Right ventricle myocardium inferior (tissue), 1 donor: ENCODE measurements at regions of chr10 and their contacts with region 1.

Region 1: GRCh38 chr10:72319416-72320254 is 35.1 kb downstream of the DNAJB12 start:
- DNase-seq: peak; percentile 98
- ATAC-seq: peak; percentile 87

Region 2: GRCh38 chr10:72248468-72249151 is 71.0 kb before region 1 on chr10:
- intact Hi-C with region 1: loop called (anchors 2 kb)
- DNase-seq: peak; percentile 89
- ATAC-seq: peak; percentile 85

Region 3: GRCh38 chr10:72297968-72298773 is 21.5 kb before region 1 on chr10:
- intact Hi-C with region 1: loop called (anchors 2 kb)
- DNase-seq: peak; percentile 98
- ATAC-seq: peak; percentile 97

Region 4: GRCh38 chr10:72340510-72341261 is 21.1 kb after region 1 on chr10:
- intact Hi-C with region 1: no loop called
- DNase-seq: peak; percentile 92
- ATAC-seq: peak; percentile 29

Region 5: DNA sequence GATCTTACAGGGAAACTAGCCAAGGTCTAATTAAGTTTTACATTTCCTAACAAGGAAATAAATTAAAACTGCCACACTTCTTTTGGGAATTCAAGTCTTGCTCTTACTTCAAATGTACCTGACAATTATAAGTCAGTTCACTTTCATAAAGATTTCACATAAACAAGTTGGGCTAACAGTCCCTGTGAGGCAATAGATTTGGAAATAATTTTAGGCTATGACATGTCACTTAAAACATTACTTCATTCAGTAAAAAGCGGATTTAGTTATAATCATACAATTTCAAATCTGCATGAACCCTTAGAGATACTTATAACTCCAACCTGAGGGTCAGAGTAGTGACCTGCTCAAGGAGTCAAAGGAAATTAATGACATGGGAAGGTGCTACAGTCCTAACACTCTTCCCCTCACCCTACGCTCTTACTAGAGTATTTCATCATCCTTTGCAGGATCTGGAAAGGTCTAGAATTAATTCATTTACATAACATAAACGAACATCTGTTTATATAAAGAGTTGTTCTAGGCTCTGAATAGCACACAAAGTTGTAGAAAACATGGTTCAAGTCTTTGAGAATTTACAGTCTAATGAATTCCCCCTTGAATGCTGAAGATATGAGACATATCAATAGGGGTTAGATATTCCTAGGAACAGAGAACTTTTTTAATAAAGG is 67.4 kb after region 1 on chr10:
- intact Hi-C with region 1: no loop called
- DNase-seq: no peak
- ATAC-seq: no peak

Region 6: DNA sequence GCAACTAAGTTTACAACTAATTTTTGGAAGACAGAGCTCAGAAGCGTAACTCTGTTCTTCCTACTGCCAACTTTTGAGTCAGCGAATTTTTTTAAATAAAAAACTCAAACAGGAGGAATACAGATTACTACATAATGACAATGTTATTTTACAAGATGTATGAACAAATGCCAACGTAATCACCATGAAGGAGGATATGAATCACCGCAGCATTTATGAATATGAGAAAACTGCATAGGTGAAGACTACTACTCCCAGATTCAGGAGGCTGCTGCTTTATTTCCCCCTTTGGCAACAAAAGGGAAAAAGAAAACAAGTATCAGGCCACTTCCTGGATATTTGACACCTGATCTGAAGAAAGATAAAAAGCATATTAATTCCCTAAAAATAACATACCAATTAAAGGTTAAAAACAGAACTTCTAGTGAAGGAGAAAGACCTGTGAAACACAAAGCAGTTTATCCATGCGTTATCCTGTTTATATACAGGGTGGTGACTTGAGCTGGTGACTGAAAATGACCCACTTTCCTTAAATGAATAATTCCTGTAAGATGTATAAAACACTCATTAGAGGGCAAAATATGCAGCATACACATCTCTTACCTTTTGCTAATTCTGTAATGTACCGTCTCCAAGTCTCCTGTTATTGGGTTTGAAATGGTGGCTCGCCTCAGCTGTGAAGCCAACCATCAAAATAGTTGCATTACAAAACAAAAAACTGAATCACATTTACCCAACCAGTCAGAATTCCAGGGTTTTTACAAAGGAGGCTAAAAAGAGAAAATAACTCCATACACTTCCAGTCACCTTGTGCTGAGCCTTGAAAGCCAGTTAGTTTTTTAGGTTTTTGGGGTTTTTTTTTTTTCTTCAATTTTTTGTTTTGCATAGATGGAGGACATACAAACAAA is 725.0 kb after region 1 on chr10:
- intact Hi-C with region 1: no loop called
- DNase-seq: no peak
- ATAC-seq: peak; percentile 46